Common myeloid progenitor, CD34-positive (primary cell): ENCODE measurements at regions of chr7 and their contacts with region 1.

Region 1: GRCh38 chr7:142516038-142516501 is 233.2 kb upstream of the PRSS1 start:
- DNase-seq: peak; percentile 73 to 87 (median 83)
- H3K4me3 ChIP-seq: peak overlapping the region in 1 of 7 experiments; percentile 6
- H3K27ac ChIP-seq: no peak overlapping the region
- H3K4me1 ChIP-seq: peaks cover 2 to 35% (median 23%) of the 10 kb centered on the region in 4 experiments
- H3K27me3 ChIP-seq: no peaks in the 10 kb centered on the region

Region 2: GRCh38 chr7:142301923-142302550 is 214.0 kb before region 1 on chr7:
- CTCF ChIA-PET with region 1: interaction called, 11 read pairs
- POLR2A ChIA-PET with region 1: no interaction called
- DNase-seq: peak in 2 of 3 donors; percentile 71
- H3K4me3 ChIP-seq: no peak overlapping the region
- H3K27ac ChIP-seq: no peak overlapping the region
- H3K4me1 ChIP-seq: peaks cover 29 to 75% (median 58%) of the 10 kb centered on the region in 4 experiments
- H3K27me3 ChIP-seq: no peaks in the 10 kb centered on the region

Region 3: DNA sequence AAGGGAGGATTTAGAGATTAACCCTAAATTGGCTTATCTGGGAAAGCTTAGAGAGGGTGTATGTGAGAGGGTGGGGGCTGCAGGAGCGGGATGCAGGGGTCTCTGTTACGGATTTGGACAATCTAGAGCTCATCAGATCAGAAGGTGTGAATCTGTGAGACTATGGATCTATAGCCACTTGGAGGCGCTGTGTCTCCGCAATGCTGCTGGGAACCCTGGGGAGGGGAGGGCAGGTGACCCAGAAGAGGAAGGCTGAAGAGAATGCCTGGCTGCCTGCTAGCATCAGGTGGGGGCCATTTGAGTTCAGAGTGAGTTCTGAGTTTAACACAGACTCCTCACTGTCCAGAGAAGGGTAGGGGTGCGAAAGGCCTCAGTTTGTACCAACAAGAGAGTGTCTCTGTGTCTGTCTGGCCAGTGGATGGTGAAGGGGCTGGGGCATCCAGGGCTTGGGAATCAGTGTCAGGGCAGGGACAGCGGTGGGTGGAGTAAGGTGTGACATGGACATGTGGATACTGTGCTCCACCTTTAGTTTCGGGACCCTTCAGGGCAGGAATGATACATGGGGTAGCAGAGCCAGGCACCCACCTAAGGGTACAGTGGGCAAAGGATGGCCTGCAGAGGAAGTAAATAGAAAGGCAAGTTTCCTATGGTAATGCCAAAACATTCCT is 70.9 kb before region 1 on chr7:
- CTCF ChIA-PET with region 1: interaction called, 2,564 read pairs
- POLR2A ChIA-PET with region 1: no interaction called
- DNase-seq: peak; percentile 63 to 80 (median 78)
- H3K4me3 ChIP-seq: no peak overlapping the region
- H3K27ac ChIP-seq: no peak overlapping the region
- H3K4me1 ChIP-seq: peaks cover 36 to 67% (median 57%) of the 10 kb centered on the region in 4 experiments
- H3K27me3 ChIP-seq: no peaks in the 10 kb centered on the region

Region 4: DNA sequence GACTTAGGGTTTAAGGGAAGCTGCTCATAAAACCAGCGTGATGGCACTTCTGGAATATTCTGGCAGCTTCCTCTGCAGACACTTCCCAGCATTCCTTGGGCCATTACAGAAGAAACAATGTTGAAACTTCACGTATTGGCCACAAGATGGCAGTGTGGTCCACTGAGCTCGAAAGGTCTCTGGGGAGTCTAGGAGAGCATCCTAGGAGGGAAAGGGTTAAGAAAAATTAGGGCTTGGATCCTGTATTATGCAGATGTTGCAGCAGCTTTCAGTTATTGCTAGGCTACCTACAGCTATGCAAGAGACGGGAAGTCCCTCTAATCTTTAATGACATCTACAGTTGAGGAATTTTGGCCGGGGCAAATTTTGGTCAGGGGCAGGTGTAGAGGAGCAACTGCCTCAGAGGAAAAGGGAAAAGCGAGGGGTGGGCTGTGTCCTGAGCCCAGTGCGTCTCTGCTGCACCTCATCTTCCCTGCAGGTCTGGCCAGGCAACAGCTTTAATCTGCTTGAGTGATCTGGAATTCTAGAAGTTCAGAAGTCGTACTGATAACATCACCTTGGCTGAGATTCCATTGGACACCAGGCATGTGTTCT is 37.5 kb before region 1 on chr7:
- CTCF ChIA-PET with region 1: interaction called, 2,564 read pairs
- POLR2A ChIA-PET with region 1: no interaction called
- DNase-seq: peak; percentile 57 to 68 (median 66)
- H3K4me3 ChIP-seq: no peak overlapping the region
- H3K27ac ChIP-seq: no peak overlapping the region
- H3K4me1 ChIP-seq: peaks cover 15 to 91% (median 76%) of the 10 kb centered on the region in 4 experiments
- H3K27me3 ChIP-seq: no peaks in the 10 kb centered on the region

Region 5: DNA sequence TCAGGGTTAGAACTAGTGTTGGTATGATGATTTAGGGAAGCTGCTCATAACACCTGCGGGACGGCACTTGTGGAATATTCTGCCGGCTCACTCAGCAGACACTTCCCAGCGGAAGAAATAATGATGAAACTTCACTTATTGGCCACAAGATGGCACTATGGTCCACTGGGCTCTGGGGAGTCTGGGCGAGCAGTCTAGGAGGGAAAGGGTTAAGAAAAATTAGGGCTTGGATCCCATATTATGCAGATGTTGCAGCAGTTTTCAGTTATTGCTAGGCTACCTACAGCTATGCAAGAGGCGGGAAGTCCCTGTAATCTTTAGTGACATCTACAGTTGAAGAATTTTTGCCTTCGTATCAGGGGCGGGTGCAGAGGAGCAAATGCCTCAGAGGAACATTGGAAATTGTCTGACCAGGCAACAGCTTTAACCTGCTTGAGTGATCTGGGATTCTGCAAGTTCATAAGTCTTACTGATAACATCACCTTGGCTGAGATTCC is 19.5 kb before region 1 on chr7:
- CTCF ChIA-PET with region 1: interaction called, 2,564 read pairs
- POLR2A ChIA-PET with region 1: interaction called, 3 read pairs
- DNase-seq: peak; percentile 70 to 84 (median 83)
- H3K4me3 ChIP-seq: peak overlapping the region in 4 of 7 experiments; percentile 21 to 57 (median 36)
- H3K27ac ChIP-seq: peak overlapping the region; percentile 27 to 32
- H3K4me1 ChIP-seq: peaks cover 11 to 69% (median 52%) of the 10 kb centered on the region in 4 experiments
- H3K27me3 ChIP-seq: no peaks in the 10 kb centered on the region